Activated T-helper 2 cell treated with anti-CD3 and anti-CD28 coated beads, Interferon-gamma antibody, Interleukin-2, Interleukin-4, amounts not matched to agents 10 μg/mL and 5 μg/mL and 100 μg/mL, durations not matched to agents 14 hours and 24 hours and 36 hours (primary cell): ENCODE measurements at regions of chr10 and their contacts with region 1.

Region 1: DNA sequence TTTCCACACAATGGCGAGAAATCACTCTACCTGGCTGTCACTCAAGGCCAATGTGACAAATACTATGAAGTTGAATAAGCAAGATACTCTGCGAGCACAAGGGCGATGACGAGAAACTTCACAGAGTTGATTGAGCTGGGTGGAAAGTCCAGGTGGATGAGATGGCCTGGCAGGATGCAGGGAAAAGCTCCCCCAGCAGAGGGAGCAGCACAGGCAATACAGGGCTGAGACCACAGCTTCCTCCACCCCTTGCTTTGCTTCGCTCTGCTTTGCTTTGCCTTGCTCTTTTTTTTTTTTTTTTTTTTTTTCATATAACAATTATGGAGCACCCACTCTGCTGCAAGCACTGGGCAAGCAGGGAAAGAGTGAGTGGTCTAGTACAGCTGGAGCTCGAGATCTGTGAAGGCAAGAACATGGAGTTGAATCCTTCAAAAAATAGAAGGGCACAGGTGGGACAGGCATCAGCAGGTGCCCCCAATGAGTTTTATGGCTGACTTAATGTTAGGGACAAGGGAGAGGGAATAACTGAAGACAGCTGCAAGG is 88.3 kb downstream of the CABCOCO1 start:
- DNase-seq: peak; percentile 63
- H3K4me3 Mint-ChIP-seq: peak overlapping the region; percentile 40
- H3K27ac Mint-ChIP-seq: peak overlapping the region; percentile 71
- H3K4me1 Mint-ChIP-seq: peaks cover 40% of the 10 kb centered on the region
- H3K27me3 Mint-ChIP-seq: no peaks in the 10 kb centered on the region

Region 2: DNA sequence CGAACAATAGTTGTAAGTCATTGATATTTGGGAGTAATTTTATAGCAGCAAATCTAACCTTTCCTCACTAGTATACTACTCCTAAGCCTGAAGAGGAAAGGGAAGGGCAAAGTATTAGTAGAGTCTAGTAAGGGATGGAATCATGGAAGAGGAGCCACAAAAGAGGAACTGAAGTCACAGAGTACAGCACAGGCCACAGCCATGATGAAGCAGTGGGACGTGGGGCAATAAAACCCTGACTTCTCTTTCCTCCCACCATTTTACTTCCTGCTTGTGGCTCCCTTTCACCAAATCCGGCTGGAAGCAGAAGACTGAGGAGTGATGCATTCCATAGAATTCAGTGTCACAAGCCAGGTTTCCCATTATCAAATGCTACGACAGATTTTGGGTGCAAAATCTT is 29.6 kb before region 1 on chr10:
- intact Hi-C with region 1: no loop called
- DNase-seq: no peak
- H3K4me3 Mint-ChIP-seq: no peak overlapping the region
- H3K27ac Mint-ChIP-seq: no peak overlapping the region
- H3K4me1 Mint-ChIP-seq: no peaks in the 10 kb centered on the region
- H3K27me3 Mint-ChIP-seq: peaks cover 8% of the 10 kb centered on the region

Region 3: GRCh38 chr10:61812052-61812721 is 61.2 kb after region 1 on chr10:
- intact Hi-C with region 1: loop called (anchors 2 kb)
- DNase-seq: no peak
- H3K4me3 Mint-ChIP-seq: no peak overlapping the region
- H3K27ac Mint-ChIP-seq: peak overlapping the region; percentile 27
- H3K4me1 Mint-ChIP-seq: peaks cover 28% of the 10 kb centered on the region
- H3K27me3 Mint-ChIP-seq: no peaks in the 10 kb centered on the region

Region 4: DNA sequence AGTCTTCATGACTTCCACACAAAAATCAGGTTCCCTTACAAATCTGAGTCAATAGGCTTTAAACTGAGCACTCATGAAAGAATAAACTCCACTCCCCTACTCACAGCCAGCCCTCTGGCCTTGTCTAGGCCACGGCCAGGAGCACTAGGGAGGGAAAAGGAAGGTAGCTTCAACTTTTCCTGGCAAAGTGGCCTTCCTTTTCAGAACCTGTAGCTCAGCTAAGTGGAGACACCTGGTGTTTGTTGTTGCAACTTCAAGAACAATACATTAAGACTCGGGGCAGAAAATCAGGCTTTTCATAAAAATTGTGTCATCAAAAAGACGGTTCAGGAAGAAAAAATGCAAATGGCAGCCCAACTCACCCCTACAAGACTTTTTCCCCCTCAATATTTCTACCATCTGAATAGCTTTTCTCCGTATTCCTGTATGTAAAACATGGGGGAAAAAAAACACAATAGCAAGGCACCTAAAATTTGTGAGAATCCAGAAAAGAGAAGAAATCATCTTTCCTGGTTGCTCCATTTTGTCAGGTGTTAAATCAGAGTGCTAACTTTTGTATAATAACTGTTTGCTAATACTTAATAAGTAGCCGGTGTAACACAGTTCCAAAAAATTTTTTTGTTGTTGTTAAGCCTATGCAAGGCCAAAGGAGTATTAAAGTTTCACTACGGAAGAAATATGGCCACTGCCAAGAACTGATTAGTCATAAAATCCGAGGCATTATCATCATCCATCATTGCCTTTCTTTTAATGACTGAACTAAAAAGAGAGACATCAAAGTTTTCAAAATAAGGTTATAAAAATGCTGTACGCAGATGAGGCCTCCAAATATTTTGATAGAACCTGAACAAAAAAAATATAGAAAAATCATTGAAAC is 84.3 kb after region 1 on chr10:
- intact Hi-C with region 1: loop called (anchors 1 kb)
- DNase-seq: no peak
- H3K4me3 Mint-ChIP-seq: no peak overlapping the region
- H3K27ac Mint-ChIP-seq: no peak overlapping the region
- H3K4me1 Mint-ChIP-seq: peaks cover 25% of the 10 kb centered on the region
- H3K27me3 Mint-ChIP-seq: no peaks in the 10 kb centered on the region

Region 5: DNA sequence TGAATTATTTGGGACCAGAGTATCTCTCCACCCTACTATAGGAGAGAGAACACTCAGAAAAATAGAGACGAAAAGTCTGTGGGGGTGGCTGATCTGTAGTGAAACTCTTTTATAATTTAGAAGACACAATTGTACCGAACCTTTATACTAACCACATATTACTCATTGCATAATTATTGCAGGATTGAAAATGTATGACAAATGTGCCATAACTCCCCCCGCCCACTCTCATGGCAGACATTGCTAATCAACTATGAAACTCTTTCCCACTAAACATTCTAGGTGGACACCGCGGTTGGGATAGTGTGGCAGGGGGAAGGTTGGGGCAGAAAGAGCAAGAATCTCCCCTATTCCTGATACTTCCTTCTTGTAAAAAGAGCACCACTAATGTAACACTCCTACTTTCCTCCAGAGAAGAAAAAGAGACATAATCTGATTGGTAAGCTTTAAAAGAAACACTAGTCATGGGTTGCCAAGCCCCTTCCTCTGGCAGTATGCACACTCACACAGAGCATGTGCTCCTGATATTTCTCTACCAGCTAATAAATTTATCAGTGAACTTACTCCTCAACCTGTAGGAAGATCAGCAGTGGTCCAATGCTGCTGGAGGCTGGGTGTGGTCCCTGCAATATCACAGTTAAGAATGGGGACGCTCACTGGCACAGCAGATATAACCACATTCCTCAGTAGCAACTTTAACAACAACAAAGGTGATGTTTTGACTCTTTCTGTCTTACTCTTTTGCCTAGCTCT is 131.8 kb after region 1 on chr10:
- intact Hi-C with region 1: loop called (anchors 5 kb)
- DNase-seq: no peak
- H3K4me3 Mint-ChIP-seq: no peak overlapping the region
- H3K27ac Mint-ChIP-seq: peak overlapping the region; percentile 81
- H3K4me1 Mint-ChIP-seq: peaks cover 16% of the 10 kb centered on the region
- H3K27me3 Mint-ChIP-seq: peaks cover 5% of the 10 kb centered on the region

Region 6: GRCh38 chr10:61992671-61993668 is 242.0 kb after region 1 on chr10:
- intact Hi-C with region 1: loop called (anchors 5 kb)
- DNase-seq: peak; percentile 49
- H3K4me3 Mint-ChIP-seq: peak overlapping the region; percentile 73
- H3K27ac Mint-ChIP-seq: peak overlapping the region; percentile 88
- H3K4me1 Mint-ChIP-seq: peaks cover 68% of the 10 kb centered on the region
- H3K27me3 Mint-ChIP-seq: no peaks in the 10 kb centered on the region